SK-N-SH (cell line): ENCODE measurements at regions of chr1 and their contacts with region 1.

Region 1: DNA sequence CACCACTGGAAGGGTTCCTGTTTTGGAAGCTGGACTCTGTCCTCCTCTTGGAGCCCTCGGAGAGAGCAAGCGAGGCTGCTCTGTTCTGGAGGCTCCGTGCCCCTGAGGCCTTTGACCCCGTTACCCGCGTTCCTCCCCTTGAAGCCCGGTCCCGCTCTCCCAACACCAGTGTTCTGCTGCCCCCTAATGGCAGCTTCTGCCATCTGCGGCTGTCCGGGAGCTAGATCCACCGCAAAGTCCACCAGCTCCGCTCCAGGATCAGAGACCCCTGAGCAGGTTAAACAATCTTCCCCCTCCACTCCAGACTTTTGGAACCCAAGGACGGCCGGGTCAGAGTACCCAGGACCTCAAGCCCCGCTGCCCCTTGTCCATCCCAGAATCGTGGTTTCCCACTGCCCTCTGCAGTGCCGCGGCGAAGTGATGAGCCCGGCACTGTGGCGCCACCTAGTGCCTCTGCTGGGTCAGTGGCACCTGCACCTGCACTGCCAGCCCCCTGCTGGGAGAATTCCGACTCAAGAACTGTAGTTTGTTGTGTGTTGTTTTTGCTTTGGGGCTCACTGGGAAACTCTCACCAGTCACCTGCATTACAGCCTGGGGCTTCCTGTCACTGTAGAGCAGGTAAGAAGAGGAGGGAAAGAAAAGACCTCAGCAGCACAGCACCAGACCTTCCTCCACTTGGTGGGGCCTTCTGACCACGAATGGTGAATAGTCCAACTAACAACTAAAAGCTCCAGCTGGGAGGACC is 63.5 kb upstream of the NFASC start:
- DNase-seq: peak; percentile 89
- H3K4me3 ChIP-seq: peak overlapping the region; percentile 50 to 81
- H3K27ac ChIP-seq: no peak overlapping the region; a peak in 1 of 4 replicates
- H3K4me1 ChIP-seq: peaks cover 0 to 2% of the 10 kb centered on the region in 2 experiments; a peak in 1 of 4 replicates
- H3K27me3 ChIP-seq: 0 out of 2 replicates have a peak, but pooled peaks cover 2% of the 10 kb centered on the region
- CTCF ChIP-seq: peak; percentile 100
- EP300 ChIP-seq: no peak
- RAD21 ChIP-seq: peak; percentile 72

Region 2: DNA sequence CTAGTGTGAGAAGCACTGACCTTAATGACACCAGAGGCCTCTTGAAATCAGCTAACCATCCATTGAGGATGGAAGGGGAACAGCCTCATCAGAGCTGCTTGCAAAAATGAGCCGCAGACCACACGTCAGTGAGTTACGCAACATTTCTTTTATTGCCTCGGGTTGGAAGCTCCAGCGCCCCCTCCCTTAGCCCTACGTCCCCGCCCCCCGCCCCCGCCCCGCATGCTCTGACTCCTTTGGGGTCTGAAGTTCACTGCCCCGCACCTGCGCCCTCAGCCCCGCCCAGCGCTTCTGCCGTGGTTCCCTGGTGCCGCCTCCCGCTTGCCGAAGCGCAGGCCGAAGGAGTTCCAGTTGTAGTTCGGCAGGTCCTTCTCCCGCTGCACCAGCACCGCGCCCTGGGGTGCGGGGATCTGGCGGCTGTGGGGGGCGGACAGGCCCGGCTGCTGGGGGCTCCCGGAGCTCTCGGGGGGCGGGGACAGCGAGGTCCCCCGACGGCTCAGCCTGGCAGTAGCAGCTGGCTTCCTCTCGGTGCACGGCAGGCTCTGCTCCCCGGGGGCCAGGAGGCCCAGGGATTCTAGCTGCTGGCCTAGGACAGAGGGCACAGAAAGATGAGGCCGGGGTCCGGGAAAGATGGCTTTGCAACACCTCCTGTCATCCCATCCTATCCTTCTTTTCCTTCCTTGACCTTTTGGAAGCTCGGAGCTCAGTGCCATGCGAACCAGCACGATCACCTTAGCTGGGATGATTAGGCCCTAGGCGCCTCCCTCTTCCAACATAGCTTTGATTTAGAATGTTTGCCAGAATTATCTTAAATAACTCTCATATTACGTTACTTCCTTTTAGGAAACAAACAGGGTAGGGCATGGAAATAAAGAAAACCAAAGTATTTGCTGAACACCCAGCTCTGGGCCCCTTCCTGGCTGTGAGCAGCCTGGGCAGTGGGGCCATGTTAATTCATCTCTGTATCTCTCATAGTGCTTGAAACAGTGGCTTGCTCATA is 616.6 kb before region 1 on chr1:
- CTCF ChIA-PET with region 1: no interaction called
- POLR2A ChIA-PET with region 1: no interaction called
- DNase-seq: no peak
- H3K4me3 ChIP-seq: no peak overlapping the region
- H3K27ac ChIP-seq: no peak overlapping the region
- H3K4me1 ChIP-seq: peaks cover 0 to 4% of the 10 kb centered on the region in 2 experiments; a peak in 2 of 4 replicates
- H3K27me3 ChIP-seq: no peaks in the 10 kb centered on the region; the same call in 1 of the 2 replicates
- CTCF ChIP-seq: no peak
- EP300 ChIP-seq: no peak
- RAD21 ChIP-seq: no peak

Region 3: DNA sequence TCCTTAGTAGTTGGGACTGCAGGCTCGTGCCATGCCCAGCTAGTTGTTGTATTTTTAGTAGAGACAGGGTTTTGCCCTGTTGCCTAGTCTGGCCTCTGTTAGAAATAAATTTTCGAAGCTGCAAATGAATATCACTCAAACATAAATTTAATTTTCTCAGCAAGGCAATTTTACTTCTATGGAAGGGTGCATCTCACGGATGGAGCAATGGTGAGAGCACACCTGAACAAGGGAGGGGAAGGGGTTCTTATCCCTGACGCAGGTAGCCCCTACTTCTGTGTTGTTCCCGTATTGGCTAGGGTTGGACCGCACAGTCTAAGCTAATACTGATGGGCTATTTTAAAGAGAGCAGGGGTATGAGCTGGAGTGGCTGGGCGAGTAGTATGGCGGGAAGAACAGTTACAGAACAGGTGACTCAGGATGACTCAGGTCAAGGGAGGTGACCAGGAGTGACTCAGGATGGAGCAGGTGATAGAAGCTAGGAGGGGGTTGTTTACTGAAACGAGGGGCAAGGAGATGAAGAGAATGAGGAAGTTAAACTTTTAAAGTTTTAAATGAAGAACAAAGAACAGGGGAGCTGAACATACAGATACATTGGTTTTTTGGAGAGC is 283.4 kb before region 1 on chr1:
- CTCF ChIA-PET with region 1: interaction called, 26 read pairs
- POLR2A ChIA-PET with region 1: no interaction called
- DNase-seq: no peak
- H3K4me3 ChIP-seq: no peak overlapping the region
- H3K27ac ChIP-seq: no peak overlapping the region
- H3K4me1 ChIP-seq: no peaks in the 10 kb centered on the region
- H3K27me3 ChIP-seq: no peaks in the 10 kb centered on the region
- CTCF ChIP-seq: no peak
- EP300 ChIP-seq: no peak
- RAD21 ChIP-seq: no peak

Region 4: GRCh38 chr1:204589409-204590038 is 217.6 kb before region 1 on chr1:
- CTCF ChIA-PET with region 1: interaction called, 14 read pairs
- POLR2A ChIA-PET with region 1: no interaction called
- DNase-seq: no peak
- H3K4me3 ChIP-seq: no peak overlapping the region
- H3K27ac ChIP-seq: no peak overlapping the region
- H3K4me1 ChIP-seq: peaks cover 9 to 14% of the 10 kb centered on the region in 2 experiments; a peak in 2 of 4 replicates
- H3K27me3 ChIP-seq: no peaks in the 10 kb centered on the region
- CTCF ChIP-seq: no peak
- EP300 ChIP-seq: no peak
- RAD21 ChIP-seq: no peak

Region 5: GRCh38 chr1:204685236-204686006 is 121.7 kb before region 1 on chr1 and contains the start of gene LRRN2:
- CTCF ChIA-PET with region 1: interaction called, 25 read pairs
- POLR2A ChIA-PET with region 1: no interaction called
- DNase-seq: peak; percentile 85
- H3K4me3 ChIP-seq: peak within 1 kb of the TSS in 1 of 2 experiments; percentile 24; a peak in 2 of 4 replicates
- H3K27ac ChIP-seq: no peak within 1 kb of the TSS
- H3K4me1 ChIP-seq: peaks cover 0 to 8% of the 10 kb centered on the region in 2 experiments; a peak in 1 of 4 replicates
- H3K27me3 ChIP-seq: peaks cover 33% of the 10 kb centered on the region
- CTCF ChIP-seq: no peak
- EP300 ChIP-seq: no peak
- RAD21 ChIP-seq: no peak
- polyA plus RNA-seq, gene LRRN2: not detected in 2 replicates

Region 6: DNA sequence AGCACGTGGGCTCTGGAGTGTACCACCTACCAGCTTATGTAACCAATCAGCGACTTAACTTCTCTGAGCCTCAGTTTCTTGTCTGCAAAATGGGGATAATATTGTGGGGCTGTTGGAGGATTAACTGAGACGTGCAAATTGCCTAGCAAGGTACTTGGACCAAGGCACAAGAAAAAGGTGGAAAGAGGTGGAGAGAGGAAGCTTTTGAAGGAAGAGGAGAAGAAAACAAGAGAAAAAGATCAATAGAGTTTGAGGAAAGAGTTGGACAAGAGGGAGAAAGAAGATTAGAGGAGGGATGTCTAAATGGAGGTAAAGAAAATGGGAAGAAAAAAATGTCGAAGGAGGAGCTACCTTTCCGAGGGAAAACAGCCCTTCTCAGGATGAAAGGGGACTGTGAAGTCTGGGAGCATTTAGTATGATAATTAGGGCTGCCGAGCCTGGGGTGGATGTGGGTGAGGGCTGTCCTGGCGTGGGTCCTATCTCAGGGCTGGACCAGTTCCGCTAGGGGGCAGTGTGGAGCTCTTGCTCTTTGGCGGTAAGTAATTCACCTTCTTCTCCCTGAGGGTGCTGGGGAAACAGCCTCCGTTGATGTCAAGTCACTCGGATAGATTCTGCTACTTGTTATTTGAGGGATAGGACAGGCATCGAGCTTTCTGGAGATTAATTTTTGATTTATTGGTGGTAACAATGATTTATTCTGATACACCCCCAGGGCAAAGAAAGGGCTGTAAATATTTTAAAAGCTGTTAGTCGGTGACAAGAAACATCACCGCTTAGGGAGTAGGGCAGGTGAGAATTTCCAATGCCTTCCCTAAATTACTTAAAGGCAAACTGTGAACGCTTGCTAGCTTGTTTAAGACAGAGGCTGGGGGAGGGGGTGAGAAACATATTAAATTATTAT is 15.4 kb before region 1 on chr1:
- CTCF ChIA-PET with region 1: interaction called, 271 read pairs
- POLR2A ChIA-PET with region 1: interaction called, 4 read pairs
- DNase-seq: peak; percentile 75
- H3K4me3 ChIP-seq: peak overlapping the region in 1 of 2 experiments; percentile 42; a peak in 1 of 4 replicates
- H3K27ac ChIP-seq: no peak overlapping the region
- H3K4me1 ChIP-seq: peaks cover 0 to 5% of the 10 kb centered on the region in 2 experiments; a peak in 2 of 4 replicates
- H3K27me3 ChIP-seq: peaks cover 26% of the 10 kb centered on the region; the same call in 1 of the 2 replicates
- CTCF ChIP-seq: peak; percentile 85
- EP300 ChIP-seq: no peak
- RAD21 ChIP-seq: peak; percentile 25; the same call in 1 of the 2 replicates

Region 7: DNA sequence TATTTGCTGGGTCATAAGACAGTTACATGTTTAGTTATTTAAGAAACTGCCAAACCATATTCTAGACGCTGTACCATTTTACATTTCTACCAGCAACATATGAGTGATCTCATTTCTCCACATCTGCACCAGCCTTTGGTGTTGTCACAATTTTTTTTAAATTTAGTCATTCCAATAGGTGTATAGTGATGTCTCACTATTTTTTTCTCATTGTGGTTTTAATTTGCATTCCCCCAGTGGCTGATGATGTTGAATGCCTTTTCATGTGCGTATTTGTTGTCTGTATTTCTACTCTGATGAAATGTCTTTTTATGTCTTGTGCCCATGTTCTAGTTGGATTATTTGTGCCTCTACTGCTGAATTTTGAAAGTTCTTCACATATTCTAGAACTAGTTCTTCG is 102.0 kb after region 1 on chr1:
- CTCF ChIA-PET with region 1: interaction called, 10 read pairs
- POLR2A ChIA-PET with region 1: no interaction called
- DNase-seq: no peak
- H3K4me3 ChIP-seq: no peak overlapping the region
- H3K27ac ChIP-seq: no peak overlapping the region
- H3K4me1 ChIP-seq: no peaks in the 10 kb centered on the region
- H3K27me3 ChIP-seq: no peaks in the 10 kb centered on the region
- CTCF ChIP-seq: no peak
- EP300 ChIP-seq: no peak
- RAD21 ChIP-seq: no peak

Region 8: GRCh38 chr1:205061665-205062069 is 254.6 kb after region 1 on chr1:
- CTCF ChIA-PET with region 1: interaction called, 35 read pairs
- POLR2A ChIA-PET with region 1: no interaction called
- DNase-seq: peak; percentile 91
- H3K4me3 ChIP-seq: no peak overlapping the region; a peak in 1 of 4 replicates
- H3K27ac ChIP-seq: no peak overlapping the region
- H3K4me1 ChIP-seq: peaks cover 0 to 5% of the 10 kb centered on the region in 2 experiments; a peak in 1 of 4 replicates
- H3K27me3 ChIP-seq: no peaks in the 10 kb centered on the region
- CTCF ChIP-seq: peak; percentile 96
- EP300 ChIP-seq: no peak
- RAD21 ChIP-seq: peak; percentile 92